ENCODE measurements at regions of chr18 and their contacts with region 1.

Region 1: GRCh38 chr18:28189400-28190239 is 12.7 kb upstream of the CDH2 start:
- DNase-seq: no peak
- ATAC-seq: no peak
- H3K4me3 ChIP-seq: no peak overlapping the region
- H3K27ac ChIP-seq: no peak overlapping the region
- H3K4me1 ChIP-seq: no peaks in the 10 kb centered on the region
- H3K27me3 ChIP-seq: no peaks in the 10 kb centered on the region

Region 2: DNA sequence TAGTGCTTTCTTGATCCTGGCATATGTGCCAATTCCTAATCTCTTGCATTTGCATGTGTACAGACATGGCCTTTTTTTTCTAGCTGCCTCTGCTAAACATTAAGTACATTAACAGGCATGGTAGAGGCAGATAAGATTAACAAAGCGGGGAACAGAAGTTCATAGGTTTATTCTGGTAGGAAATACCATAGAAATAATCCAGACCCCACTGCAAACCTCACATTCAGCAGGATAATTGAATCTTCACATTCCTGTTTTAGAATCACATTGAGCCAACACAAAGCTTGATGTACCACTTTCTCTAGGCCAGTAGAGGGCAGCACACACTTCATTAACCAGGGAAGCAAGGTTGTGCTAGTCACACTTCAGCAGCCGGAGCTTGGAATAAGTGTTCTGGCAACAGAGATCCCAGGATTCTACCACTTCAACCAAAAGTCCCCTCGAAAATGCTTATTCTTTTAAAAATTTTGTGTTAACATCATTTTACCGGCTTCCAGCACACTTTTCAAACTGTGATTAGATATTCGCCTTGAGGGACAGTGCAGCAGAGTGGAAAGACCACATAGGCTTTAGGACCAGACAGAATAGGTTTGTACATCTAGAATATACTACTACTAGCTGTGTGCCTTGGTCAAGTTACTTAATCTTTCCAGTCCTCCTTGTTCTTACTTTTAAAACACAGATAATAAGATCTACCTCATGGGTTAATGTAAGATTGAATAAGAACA is 584.3 kb before region 1 on chr18:
- intact Hi-C with region 1: loop called (anchors 5 to 10 kb)
- DNase-seq: peak in 1 of 2 donors; percentile 43
- ATAC-seq: peak; percentile 85
- H3K4me3 ChIP-seq: no peak overlapping the region
- H3K27ac ChIP-seq: no peak overlapping the region
- H3K4me1 ChIP-seq: no peaks in the 10 kb centered on the region
- H3K27me3 ChIP-seq: no peaks in the 10 kb centered on the region

Region 3: DNA sequence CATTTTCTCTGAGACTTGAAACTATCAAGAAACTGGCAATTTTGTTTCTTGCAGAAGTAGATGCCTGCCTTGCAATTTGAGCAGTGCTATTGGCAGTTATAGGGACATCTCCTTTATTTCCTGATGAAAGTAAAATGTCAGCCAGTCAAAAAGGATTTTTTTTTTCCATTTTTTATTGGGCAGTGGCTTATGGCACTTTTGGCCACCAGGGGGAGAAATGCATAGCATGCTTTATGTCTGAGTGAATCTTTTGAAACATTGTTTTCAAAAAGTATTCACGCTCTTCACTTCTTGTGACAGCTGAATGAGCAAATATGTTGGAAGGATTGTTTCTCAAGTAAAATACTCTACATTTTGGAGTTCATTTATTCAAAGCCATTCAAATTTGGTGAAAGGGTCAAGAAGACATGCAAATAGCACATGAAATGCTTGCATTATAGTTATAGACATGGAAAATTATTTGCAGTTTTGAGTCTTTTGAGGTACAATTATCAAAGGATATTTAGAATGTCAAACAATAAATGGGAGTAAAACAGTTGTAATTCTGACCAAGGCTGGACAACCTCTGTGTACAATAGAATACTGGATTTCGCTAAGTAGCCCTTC is 503.7 kb before region 1 on chr18:
- intact Hi-C with region 1: loop called in 1 of 2 experiments (anchors 10 kb)
- DNase-seq: no peak
- ATAC-seq: no peak
- H3K4me3 ChIP-seq: no peak overlapping the region
- H3K27ac ChIP-seq: no peak overlapping the region
- H3K4me1 ChIP-seq: no peaks in the 10 kb centered on the region
- H3K27me3 ChIP-seq: no peaks in the 10 kb centered on the region

Region 4: DNA sequence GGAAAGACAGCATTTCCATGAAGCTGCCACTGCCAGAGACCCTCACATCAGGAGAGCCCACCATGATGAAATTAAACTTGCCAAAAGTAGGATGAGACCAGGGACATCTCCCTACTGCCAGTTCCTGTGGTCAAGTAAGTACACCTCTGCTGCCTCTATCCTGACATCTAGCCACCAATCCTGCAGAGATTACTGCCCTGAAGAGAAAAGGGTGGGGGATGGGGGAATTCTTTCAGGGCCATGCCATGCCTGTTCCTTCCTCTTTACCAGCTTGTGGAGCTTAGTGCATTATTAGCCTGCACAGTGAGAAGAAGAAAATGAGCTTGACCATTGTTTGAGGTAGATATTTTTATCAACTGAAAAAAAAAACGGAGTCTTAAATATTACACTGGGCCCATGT is 384.6 kb after region 1 on chr18:
- intact Hi-C with region 1: loop called in 1 of 2 experiments (anchors 5 kb)
- DNase-seq: no peak
- ATAC-seq: no peak
- H3K4me3 ChIP-seq: no peak overlapping the region
- H3K27ac ChIP-seq: no peak overlapping the region
- H3K4me1 ChIP-seq: no peaks in the 10 kb centered on the region
- H3K27me3 ChIP-seq: no peaks in the 10 kb centered on the region

Measured in aorta (tissue), 5 donors.